ENCODE measurements at regions of chr18 and their contacts with region 1.

Region 1: DNA sequence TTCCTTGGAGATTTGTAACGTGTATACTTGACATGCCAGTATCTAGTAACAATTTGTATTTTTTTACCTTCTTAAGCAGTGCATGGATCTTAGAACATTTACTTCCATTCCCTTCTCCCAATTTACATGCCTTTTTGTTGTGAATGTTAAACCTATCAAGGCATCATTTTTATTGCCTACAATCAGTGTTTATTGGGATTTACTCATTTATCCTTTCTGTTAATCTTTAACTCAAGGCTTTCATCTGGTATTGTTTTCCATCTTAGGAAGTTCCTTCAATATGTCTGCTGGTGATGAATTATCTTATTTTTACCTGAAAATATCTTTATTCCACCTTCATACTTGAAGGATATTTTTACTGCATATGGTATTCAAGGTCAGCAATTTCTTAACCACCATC is 88.5 kb upstream of the EMILIN2 start:
- DNase-seq: no peak
- ATAC-seq: peak; percentile 90

Region 2: GRCh38 chr18:2706903-2707302 is 51.4 kb before region 1 on chr18:
- intact Hi-C with region 1: loop called in 1 of 2 experiments (anchors 10 kb)
- DNase-seq: no peak
- ATAC-seq: no peak

Region 3: DNA sequence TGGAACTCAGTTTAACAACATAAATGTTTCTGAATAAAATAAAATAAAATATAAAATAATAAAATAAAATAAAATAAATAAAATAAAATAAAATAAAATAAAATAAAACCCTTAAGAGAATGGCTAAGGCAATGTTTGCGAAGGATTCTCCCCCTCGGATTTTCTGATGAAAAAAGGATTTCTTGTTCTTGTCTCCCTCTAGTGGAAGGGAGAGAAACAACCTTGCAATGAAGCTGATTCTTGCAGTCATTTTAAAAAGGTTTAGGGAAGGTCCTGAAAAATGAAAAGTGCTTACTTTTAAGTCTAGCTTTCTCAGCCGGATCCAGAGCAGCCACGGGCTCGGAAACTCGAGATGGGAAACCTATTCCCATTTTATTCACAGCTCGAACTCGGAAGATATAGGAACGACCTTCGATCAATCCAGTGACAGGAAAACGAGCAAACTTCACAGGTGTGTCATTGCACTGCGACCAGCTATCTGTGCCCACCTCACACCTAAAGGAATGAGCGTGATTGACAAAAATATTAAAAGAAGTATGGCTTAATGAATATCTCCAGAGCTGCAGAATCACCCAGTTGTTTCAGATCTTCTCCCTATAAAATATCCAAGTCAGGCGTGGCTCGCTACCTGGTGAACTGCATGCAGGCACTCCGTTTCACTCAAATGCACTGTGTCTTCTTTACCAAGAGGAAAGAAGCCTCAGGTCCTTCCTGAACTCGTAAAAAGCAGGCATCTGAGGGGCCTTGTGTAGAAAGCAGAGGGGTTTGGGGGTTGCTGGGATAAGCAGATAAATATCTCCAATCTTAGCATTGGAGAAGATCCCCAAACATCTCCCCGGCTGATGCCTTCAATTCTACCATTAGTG is 393.3 kb after region 1 on chr18:
- intact Hi-C with region 1: no loop called
- DNase-seq: peak in 1 of 2 donors; percentile 15
- ATAC-seq: peak; percentile 63